Transverse colon (tissue), 4 donors: ENCODE measurements at regions of chr2 and their contacts with region 1.

Region 1: DNA sequence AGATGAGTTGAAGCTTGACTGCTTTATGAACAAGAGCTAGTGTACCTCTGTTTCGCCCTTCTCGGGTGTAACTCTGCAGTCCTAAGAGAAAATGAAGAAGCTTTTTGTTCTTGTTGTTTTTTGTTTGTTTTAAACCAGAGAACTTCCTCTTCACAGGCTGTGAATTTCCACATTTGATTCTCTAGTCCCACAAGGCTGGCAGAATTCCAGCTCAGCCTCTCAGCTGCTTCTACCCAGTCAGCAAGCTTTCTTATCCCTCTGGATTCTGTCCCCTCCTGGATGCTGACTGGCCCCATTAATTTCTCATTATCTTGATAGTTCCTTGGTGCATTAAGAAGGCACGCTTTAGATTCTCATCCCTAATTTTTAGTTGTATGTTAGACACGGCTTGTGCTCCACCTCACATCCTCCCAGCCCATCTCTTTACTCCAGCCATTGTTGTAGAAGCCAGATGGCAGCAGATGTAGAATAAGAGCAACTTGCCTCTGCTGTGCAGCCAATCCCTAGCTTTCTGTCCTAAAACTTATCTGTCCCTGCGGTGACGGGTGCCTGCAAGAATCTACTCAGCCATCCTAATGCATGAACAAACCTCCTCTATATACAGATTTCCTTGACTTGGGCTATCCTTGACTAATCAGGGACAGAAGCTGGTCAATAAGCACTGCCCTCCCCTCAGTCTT is 12.3 kb upstream of the RESP18 start:
- DNase-seq: peak; percentile 38
- H3K4me3 ChIP-seq: no peak overlapping the region
- H3K27ac ChIP-seq: no peak overlapping the region
- H3K4me1 ChIP-seq: peaks cover 0 to 2% (median 0%) of the 10 kb centered on the region in 4 donors
- H3K27me3 ChIP-seq: peaks cover 4% of the 10 kb centered on the region
- CTCF ChIP-seq: no peak
- EP300 ChIP-seq: no peak
- POLR2A ChIP-seq: no peak

Region 2: GRCh38 chr2:218429571-218430301 is 915.2 kb before region 1 on chr2:
- in situ Hi-C with region 1: no loop called
- intact Hi-C with region 1: loop called (anchors 5 kb)
- DNase-seq: no peak
- H3K4me3 ChIP-seq: no peak overlapping the region
- H3K27ac ChIP-seq: no peak overlapping the region
- H3K4me1 ChIP-seq: no peaks in the 10 kb centered on the region
- H3K27me3 ChIP-seq: no peaks in the 10 kb centered on the region
- CTCF ChIP-seq: no peak
- EP300 ChIP-seq: no peak
- POLR2A ChIP-seq: no peak

Region 3: GRCh38 chr2:219912491-219912921 is 567.6 kb after region 1 on chr2:
- in situ Hi-C with region 1: no loop called
- intact Hi-C with region 1: no loop called
- DNase-seq: no peak
- H3K4me3 ChIP-seq: no peak overlapping the region
- H3K27ac ChIP-seq: peak overlapping the region in 1 of 4 donors; percentile 2
- H3K4me1 ChIP-seq: no peaks in the 10 kb centered on the region
- H3K27me3 ChIP-seq: no peaks in the 10 kb centered on the region
- CTCF ChIP-seq: peak in 1 of 5 experiments; percentile 9
- EP300 ChIP-seq: no peak
- POLR2A ChIP-seq: no peak

Region 4: GRCh38 chr2:220353897-220354296 is 1009.0 kb after region 1 on chr2:
- in situ Hi-C with region 1: no loop called
- intact Hi-C with region 1: no loop called
- DNase-seq: no peak
- H3K4me3 ChIP-seq: no peak overlapping the region
- H3K27ac ChIP-seq: no peak overlapping the region
- H3K4me1 ChIP-seq: no peaks in the 10 kb centered on the region
- H3K27me3 ChIP-seq: no peaks in the 10 kb centered on the region
- CTCF ChIP-seq: no peak
- EP300 ChIP-seq: no peak
- POLR2A ChIP-seq: no peak